Thyroid gland (tissue), 4 donors: ENCODE measurements at regions of chr11 and their contacts with region 1.

Region 1: GRCh38 chr11:116641561-116642045 is 131.2 kb downstream of the BUD13 start:
- DNase-seq: peak; percentile 56 to 59
- H3K4me3 ChIP-seq: no peak overlapping the region
- H3K27ac ChIP-seq: no peak overlapping the region
- H3K4me1 ChIP-seq: no peaks in the 10 kb centered on the region
- H3K27me3 ChIP-seq: no peaks in the 10 kb centered on the region
- CTCF ChIP-seq: peak in 5 of 6 experiments; percentile 19 to 81 (median 72)
- POLR2A ChIP-seq: no peak

Region 2: GRCh38 chr11:116454020-116454645 is 187.5 kb before region 1 on chr11:
- intact Hi-C with region 1: loop called (anchors 10 kb)
- DNase-seq: peak; percentile 51 to 57
- H3K4me3 ChIP-seq: no peak overlapping the region
- H3K27ac ChIP-seq: no peak overlapping the region
- H3K4me1 ChIP-seq: no peaks in the 10 kb centered on the region
- H3K27me3 ChIP-seq: no peaks in the 10 kb centered on the region
- CTCF ChIP-seq: peak in 5 of 6 experiments; percentile 22 to 61 (median 59)
- POLR2A ChIP-seq: no peak

Region 3: DNA sequence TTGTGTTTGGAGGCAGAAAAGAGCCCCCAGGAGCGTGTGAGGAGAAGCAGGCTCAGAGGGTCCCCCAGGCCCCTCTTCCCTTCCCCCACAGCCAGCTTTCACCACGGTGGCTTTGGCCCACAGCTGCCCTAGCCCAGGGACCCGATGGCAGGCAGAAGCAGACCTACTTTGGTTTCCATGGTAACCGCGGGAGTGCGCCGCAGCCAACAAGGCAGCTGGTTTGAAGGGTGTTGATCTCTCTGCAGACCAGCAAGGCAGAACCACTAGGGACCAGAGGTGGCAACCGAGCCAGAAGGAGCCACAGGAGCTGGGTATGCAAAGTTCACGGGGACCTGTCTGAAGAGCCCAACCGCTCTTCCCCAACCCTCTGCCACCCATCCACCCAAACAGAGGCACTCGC is 61.8 kb after region 1 on chr11:
- intact Hi-C with region 1: no loop called
- DNase-seq: peak; percentile 24 to 26
- H3K4me3 ChIP-seq: no peak overlapping the region
- H3K27ac ChIP-seq: no peak overlapping the region
- H3K4me1 ChIP-seq: no peaks in the 10 kb centered on the region
- H3K27me3 ChIP-seq: no peaks in the 10 kb centered on the region
- CTCF ChIP-seq: no peak
- POLR2A ChIP-seq: no peak